ENCODE measurements at regions of chr20 and their contacts with region 1.

Region 1: DNA sequence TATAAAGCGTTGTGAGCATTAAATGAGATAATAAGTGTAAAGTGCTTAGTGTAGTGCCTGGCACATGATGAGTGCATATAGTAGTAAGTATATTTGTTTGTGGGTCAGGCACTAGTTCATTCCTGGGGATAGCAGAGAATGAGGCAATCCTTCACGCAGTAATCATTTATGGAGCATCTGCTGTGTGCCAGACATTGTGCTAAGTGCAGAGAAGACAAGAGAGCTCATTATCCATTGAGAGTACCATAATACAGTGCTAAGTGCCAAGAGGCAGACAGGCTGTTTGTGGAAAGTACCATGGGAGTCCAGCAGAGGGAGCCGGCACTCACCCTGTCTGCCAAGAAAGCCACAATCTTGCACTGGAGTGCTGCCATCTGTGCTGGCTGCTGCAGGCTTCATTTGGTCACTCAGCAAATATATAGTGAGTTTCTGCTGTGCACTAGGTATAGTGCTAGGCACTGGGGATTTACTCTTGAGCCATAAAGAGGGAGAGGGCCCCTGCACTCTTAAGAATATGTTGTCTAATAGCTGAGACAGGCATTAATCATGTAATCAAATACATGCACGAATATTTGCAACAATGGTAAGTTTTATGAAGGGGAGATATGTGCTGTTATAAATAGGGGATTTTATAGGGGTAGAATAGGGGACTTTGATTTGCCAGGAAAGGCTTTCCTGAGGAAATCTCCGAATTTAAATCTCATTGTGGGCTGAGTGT is 12.9 kb upstream of the MROH8 start:
- DNase-seq: peak; percentile 80 to 98 (median 94)

Region 2: GRCh38 chr20:37160683-37161082 is 31.6 kb before region 1 on chr20:
- intact Hi-C with region 1: no loop called
- DNase-seq: no peak

Region 3: GRCh38 chr20:37384683-37385174 is 192.4 kb after region 1 on chr20:
- intact Hi-C with region 1: loop called (anchors 10 kb)
- DNase-seq: peak in 36 of 42 donors; percentile 20 to 82 (median 64)

Region 4: DNA sequence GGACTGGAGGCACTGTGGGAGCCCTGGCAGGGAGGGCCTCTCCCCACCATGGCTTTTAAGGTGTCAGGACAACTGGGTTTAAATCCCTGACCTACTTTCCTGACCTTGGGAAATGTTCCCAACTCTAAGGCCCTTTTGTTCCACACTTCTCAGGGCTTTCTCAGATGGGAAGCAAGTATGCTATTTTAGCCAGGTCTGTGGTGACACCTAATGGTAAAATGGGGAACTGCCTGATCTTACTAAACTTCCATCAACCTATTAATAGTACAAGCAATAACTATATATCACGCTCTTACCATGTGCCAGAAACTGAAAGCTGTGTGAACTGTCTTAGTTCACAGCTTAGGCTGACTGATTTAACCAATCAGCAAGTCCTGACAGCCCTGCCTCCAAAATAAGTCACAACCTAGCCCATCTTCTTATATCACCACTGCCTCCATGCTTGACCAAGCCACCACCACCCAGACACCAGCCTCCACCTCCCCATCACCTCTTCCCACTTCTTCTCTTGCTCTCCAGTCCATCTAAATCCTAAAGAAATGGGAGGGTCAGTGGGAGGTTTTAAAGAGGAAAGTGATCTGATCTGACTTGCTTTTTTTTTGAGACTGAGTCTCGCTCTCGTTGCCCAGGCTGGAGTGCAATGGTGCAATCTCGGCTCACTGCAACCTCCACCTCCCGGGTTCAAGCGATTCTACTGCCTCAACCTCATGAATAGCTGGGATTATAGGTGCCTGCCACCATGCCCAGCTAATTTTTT is 342.3 kb after region 1 on chr20:
- intact Hi-C with region 1: loop called (anchors 5 kb)
- DNase-seq: peak in 26 of 42 donors; percentile 11 to 87 (median 69)

Measured in head of caudate nucleus (tissue), 42 donors.